Activated naive CD4-positive, alpha-beta T cell treated with anti-CD3 and anti-CD28 coated beads for 36 hours (primary cell): ENCODE measurements at regions of chr9 and their contacts with region 1.

Region 1: GRCh38 chr9:4984621-4985385 is at the start of gene JAK2:
- DNase-seq: peak; percentile 92
- H3K4me3 Mint-ChIP-seq: no peak within 1 kb of the TSS
- H3K27ac Mint-ChIP-seq: peak within 1 kb of the TSS; percentile 97
- H3K4me1 Mint-ChIP-seq: peaks cover 46% of the 10 kb centered on the region
- H3K27me3 Mint-ChIP-seq: no peaks in the 10 kb centered on the region
- total RNA-seq, gene JAK2: 46.8 to 51.0 TPM

Region 2: GRCh38 chr9:4604678-4605095 is 380.1 kb before region 1 on chr9:
- CTCF ChIA-PET with region 1: no interaction called
- intact Hi-C with region 1: loop called (anchors 5 kb)
- DNase-seq: peak; percentile 88
- H3K4me3 Mint-ChIP-seq: no peak overlapping the region
- H3K27ac Mint-ChIP-seq: no peak overlapping the region
- H3K4me1 Mint-ChIP-seq: peaks cover 19% of the 10 kb centered on the region
- H3K27me3 Mint-ChIP-seq: no peaks in the 10 kb centered on the region

Region 3: DNA sequence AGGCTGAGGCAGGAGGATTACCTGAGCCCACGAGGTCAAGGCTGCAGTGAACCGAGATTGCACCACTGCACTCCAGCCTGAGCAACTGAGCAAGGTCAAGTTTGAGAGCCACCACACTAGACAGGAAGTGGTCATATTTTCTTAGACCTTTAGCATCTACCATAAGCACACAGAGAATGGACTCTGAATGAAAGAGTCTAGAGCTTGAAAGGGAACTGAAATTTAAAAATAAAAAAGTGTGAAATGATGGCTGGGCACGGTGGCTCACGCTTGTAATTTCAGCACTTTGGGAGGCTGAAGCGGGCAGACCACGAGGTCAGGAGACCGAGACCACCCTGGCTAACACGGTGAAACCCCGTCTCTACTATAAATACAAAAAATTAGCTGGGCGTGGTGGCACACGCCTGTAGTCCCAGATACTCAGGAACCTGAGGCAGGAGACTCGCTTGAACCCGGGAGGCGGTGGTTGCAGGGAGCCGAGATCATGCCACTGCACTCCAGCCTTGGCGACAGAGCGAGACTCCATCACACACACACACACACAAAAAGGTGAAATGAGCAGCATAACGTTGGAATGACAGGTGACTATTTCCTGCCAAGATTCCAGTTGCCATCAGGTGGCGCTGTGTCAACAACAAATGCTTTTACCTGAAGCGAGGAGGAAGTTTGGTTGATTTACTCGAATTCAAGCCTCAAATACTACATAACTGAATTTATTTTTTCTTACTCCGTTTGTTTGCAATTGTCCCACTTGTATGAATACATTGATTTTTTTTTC is 222.5 kb before region 1 on chr9:
- CTCF ChIA-PET with region 1: interaction called, 92 read pairs
- intact Hi-C with region 1: loop called (anchors 1 kb)
- DNase-seq: peak; percentile 94
- H3K4me3 Mint-ChIP-seq: peak overlapping the region; percentile 49
- H3K27ac Mint-ChIP-seq: peak overlapping the region; percentile 81
- H3K4me1 Mint-ChIP-seq: peaks cover 22% of the 10 kb centered on the region
- H3K27me3 Mint-ChIP-seq: peaks cover 7% of the 10 kb centered on the region

Region 4: GRCh38 chr9:4923580-4924544 is 60.9 kb before region 1 on chr9:
- CTCF ChIA-PET with region 1: interaction called, 12 read pairs
- intact Hi-C with region 1: loop called (anchors 1 kb)
- DNase-seq: peak; percentile 48
- H3K4me3 Mint-ChIP-seq: no peak overlapping the region
- H3K27ac Mint-ChIP-seq: peak overlapping the region; percentile 57
- H3K4me1 Mint-ChIP-seq: peaks cover 32% of the 10 kb centered on the region
- H3K27me3 Mint-ChIP-seq: no peaks in the 10 kb centered on the region

Region 5: DNA sequence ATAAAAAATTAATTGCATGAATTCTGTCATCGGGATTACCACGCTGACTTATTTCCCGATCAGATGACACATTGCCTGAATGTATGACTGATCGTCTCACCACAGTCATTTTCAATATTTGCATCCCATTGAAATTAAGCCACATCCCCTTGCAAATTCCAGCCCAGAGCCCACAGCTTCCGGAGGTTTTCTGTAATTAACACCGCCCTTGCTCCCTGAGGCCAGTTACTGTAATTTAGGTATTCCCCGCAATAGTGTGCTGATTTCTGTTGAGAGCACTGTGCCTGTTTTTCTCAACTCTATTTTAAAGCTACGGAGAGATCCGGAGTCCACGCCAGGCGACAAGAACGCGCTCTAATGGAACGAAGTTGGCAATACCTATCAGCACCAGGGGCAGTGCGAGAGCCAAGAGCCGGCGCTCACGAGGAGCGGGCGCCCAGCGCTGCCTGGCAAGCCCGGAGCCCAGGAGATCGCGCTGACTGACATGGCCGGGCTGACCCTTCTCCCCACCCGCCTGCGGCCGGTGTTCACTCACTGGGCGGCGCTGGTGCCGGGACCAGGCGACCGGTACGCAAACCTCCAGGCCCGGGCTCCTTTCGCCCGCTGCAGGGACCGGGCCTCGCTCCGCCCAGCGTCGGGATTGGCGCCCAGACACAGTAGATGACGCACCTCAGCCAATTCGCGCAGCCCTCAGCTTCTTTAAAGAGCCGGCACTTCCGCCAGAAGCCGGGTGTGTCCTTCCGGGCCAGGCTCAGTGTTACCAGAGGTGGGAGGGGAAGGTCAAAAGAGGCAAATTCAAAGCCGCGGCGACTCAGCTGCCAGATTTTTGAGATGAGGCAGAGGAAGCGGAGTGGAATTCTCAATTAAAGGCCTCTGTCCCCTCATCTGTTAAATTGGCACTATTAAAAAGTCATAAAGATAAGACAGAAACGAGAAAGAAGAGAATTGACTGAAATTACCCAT is 452.7 kb after region 1 on chr9 and contains the start of gene PLGRKT:
- CTCF ChIA-PET with region 1: no interaction called
- intact Hi-C with region 1: loop called (anchors 1 kb)
- DNase-seq: peak; percentile 95
- H3K4me3 Mint-ChIP-seq: peak within 1 kb of the TSS; percentile 92
- H3K27ac Mint-ChIP-seq: peak within 1 kb of the TSS; percentile 98
- H3K4me1 Mint-ChIP-seq: peaks cover 51% of the 10 kb centered on the region
- H3K27me3 Mint-ChIP-seq: no peaks in the 10 kb centered on the region
- total RNA-seq, gene PLGRKT: 48.9 to 51.4 TPM

Region 6: GRCh38 chr9:5575000-5575399 is 590.2 kb after region 1 on chr9:
- CTCF ChIA-PET with region 1: no interaction called
- intact Hi-C with region 1: no loop called
- DNase-seq: no peak
- H3K4me3 Mint-ChIP-seq: no peak overlapping the region
- H3K27ac Mint-ChIP-seq: no peak overlapping the region
- H3K4me1 Mint-ChIP-seq: peaks cover 21% of the 10 kb centered on the region
- H3K27me3 Mint-ChIP-seq: no peaks in the 10 kb centered on the region

Region 7: GRCh38 chr9:5764130-5764868 is 779.5 kb after region 1 on chr9:
- CTCF ChIA-PET with region 1: no interaction called
- intact Hi-C with region 1: loop called (anchors 2 kb)
- DNase-seq: peak; percentile 55
- H3K4me3 Mint-ChIP-seq: no peak overlapping the region
- H3K27ac Mint-ChIP-seq: peak overlapping the region; percentile 83
- H3K4me1 Mint-ChIP-seq: peaks cover 72% of the 10 kb centered on the region
- H3K27me3 Mint-ChIP-seq: no peaks in the 10 kb centered on the region